ENCODE measurements at regions of chr12 and their contacts with region 1.

Region 1: GRCh38 chr12:12334367-12335040 is 15.5 kb downstream of the MANSC1 start:
- DNase-seq: peak; percentile 53
- ATAC-seq: peak; percentile 88
- H3K4me3 ChIP-seq: no peak overlapping the region
- H3K27ac ChIP-seq: no peak overlapping the region
- H3K4me1 ChIP-seq: peaks cover 34% of the 10 kb centered on the region
- H3K27me3 ChIP-seq: no peaks in the 10 kb centered on the region
- CTCF ChIP-seq: peak; percentile 82
- EP300 ChIP-seq: no peak
- POLR2A ChIP-seq: no peak
- RAD21 ChIP-seq: peak; percentile 62; the same call in 1 of the 2 replicates

Region 2: DNA sequence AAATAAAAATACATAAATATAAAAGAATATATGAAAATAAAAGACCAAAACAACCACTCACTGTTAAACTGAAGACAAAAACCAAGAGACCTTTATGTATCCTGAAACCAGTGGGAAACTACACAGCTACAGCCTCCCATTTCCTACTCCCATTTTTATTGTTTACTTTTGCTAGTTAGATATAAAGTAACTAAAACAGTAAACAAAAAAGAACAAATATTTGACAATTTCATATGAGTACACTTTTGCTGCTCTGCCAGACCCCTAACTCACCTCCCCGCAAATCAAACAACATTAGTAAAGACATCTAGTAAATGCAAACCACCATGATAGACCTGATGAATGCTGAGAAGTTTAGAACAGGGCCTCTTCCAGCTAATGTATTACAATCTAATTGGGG is 166.7 kb before region 1 on chr12:
- CTCF ChIA-PET with region 1: no interaction called
- POLR2A ChIA-PET with region 1: no interaction called
- in situ Hi-C with region 1: no loop called
- intact Hi-C with region 1: loop called (anchors 5 kb)
- DNase-seq: peak; percentile 45
- ATAC-seq: peak; percentile 78
- H3K4me3 ChIP-seq: no peak overlapping the region; a peak in 2 of 6 replicates
- H3K27ac ChIP-seq: no peak overlapping the region
- H3K4me1 ChIP-seq: peaks cover 43% of the 10 kb centered on the region
- H3K27me3 ChIP-seq: no peaks in the 10 kb centered on the region
- CTCF ChIP-seq: no peak
- EP300 ChIP-seq: peak in 1 of 2 experiments; percentile 34; a peak in 1 of 4 replicates
- POLR2A ChIP-seq: no peak
- RAD21 ChIP-seq: no peak

Measured in HepG2 (cell line).